Stomach (tissue), 19 donors: ENCODE measurements at regions of chr11 and their contacts with region 1.

Region 1: GRCh38 chr11:87281496-87281895 is 243.8 kb downstream of the TMEM135 start:
- DNase-seq: peak in 1 of 2 donors; percentile 81
- H3K4me3 ChIP-seq: no peak overlapping the region
- H3K27ac ChIP-seq: no peak overlapping the region
- H3K4me1 ChIP-seq: peaks cover 0 to 30% (median 5%) of the 10 kb centered on the region in 4 donors
- H3K27me3 ChIP-seq: no peaks in the 10 kb centered on the region
- CTCF ChIP-seq: peak in 2 of 7 experiments; percentile 20
- EP300 ChIP-seq: no peak
- POLR2A ChIP-seq: no peak

Region 2: GRCh38 chr11:86869966-86870570 is 411.4 kb before region 1 on chr11:
- intact Hi-C with region 1: loop called (anchors 10 kb)
- DNase-seq: peak; percentile 50 to 81
- H3K4me3 ChIP-seq: no peak overlapping the region
- H3K27ac ChIP-seq: no peak overlapping the region
- H3K4me1 ChIP-seq: peaks cover 0 to 5% (median 0%) of the 10 kb centered on the region in 4 donors
- H3K27me3 ChIP-seq: no peaks in the 10 kb centered on the region
- CTCF ChIP-seq: peak in 5 of 7 experiments; percentile 51 to 74 (median 72)
- EP300 ChIP-seq: no peak
- POLR2A ChIP-seq: no peak